Tibial artery (tissue), 4 donors: ENCODE measurements at regions of chr1 and their contacts with region 1.

Region 1: GRCh38 chr1:27662707-27663393 is 9.1 kb downstream of the IFI6 start:
- DNase-seq: peak; percentile 86 to 89
- H3K4me3 ChIP-seq: no peak overlapping the region
- H3K27ac ChIP-seq: peak overlapping the region; percentile 2 to 25
- H3K4me1 ChIP-seq: peaks cover 3 to 37% (median 17%) of the 10 kb centered on the region in 4 donors
- H3K27me3 ChIP-seq: no peaks in the 10 kb centered on the region
- CTCF ChIP-seq: peak; percentile 89 to 96

Region 2: DNA sequence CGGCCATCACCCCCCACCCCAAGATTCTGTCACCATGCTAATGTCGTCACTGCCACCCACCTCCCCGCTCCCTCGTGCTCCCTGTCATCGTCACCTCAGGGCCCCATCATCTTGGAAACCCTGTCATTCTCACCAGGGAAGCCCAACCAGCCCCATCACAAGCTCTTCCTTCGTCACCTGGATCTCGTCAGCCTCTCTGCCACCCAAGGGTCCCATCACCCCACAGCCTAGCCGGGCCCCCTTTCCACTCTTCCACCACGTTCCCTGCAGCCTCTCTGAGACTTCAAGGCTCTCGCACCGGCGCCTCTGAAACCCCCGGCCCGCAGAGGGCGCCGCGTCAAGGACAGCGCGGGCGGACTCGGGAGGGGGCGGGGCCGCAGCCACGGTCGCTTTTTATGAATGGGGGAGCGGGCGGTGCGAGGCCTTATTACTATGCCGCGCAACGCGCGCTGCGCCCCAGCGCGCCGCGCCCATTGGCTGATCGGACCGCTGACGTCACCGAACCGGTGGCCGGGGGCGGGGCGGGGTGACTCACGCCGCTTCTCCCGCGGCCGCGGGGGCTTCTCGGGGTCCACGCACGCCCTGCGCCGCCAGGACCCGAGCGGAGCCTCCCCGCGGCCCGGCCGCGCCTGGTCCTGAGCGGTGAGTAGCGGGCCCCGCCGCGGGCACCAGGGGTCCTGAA is 270.6 kb before region 1 on chr1 and contains the start of gene GPR3:
- intact Hi-C with region 1: loop called (anchors 10 kb)
- DNase-seq: peak; percentile 86 to 87
- H3K4me3 ChIP-seq: peak within 1 kb of the TSS; percentile 42 to 53
- H3K27ac ChIP-seq: peak within 1 kb of the TSS; percentile 19 to 26
- H3K4me1 ChIP-seq: peaks cover 0 to 27% (median 19%) of the 10 kb centered on the region in 4 donors
- H3K27me3 ChIP-seq: peaks cover 0 to 10% of the 10 kb centered on the region in 2 donors
- CTCF ChIP-seq: peak; percentile 41 to 54

Region 3: DNA sequence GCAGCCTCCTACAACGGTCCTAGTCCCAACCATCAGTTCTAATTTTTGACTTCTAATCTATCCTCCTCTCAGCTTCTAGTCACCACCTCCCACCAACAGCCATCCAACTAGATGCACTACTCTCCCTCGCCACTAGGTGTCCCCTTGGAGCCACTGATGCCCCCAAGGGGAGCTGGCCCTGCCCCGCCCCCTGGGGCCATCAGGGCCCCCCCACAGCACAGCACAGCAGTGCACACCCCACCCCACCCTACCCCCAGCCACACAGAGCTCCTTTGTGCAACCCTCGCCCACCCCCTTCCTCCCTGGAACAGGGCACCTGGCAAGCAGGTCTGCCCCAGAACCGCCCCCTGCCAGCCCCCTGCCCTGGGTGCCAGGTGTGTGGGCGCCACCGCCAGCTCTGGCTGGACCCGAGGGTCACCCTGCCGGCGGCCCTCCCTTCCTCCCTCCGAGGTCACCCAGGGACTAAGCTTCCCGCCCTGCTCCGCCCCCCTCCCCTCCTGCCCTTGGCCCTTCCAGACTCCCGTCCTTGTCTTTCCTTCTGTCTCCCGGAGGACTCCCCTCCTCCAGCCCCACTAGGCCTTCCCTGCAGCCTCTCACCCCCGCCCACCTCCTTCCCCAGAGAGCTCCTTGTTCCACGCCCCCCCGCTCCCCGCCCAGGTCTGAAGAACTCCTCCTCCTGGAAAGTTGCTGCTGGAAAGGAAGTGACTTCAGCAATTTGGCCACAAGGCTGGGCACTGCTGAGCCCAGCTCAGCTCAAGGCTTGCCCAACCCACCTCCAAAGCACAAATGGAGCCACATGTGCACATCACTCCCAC is 105.9 kb before region 1 on chr1:
- intact Hi-C with region 1: loop called (anchors 10 kb)
- DNase-seq: peak; percentile 97 to 99
- H3K4me3 ChIP-seq: peak overlapping the region; percentile 37 to 47
- H3K27ac ChIP-seq: peak overlapping the region; percentile 90 to 97
- H3K4me1 ChIP-seq: peaks cover 20 to 77% (median 70%) of the 10 kb centered on the region in 4 donors
- H3K27me3 ChIP-seq: no peaks in the 10 kb centered on the region
- CTCF ChIP-seq: peak; percentile 84 to 96

Region 4: GRCh38 chr1:27609618-27610240 is 53.1 kb before region 1 on chr1:
- intact Hi-C with region 1: loop called (anchors 2 kb)
- DNase-seq: no peak
- H3K4me3 ChIP-seq: no peak overlapping the region
- H3K27ac ChIP-seq: no peak overlapping the region
- H3K4me1 ChIP-seq: peaks cover 0 to 10% (median 2%) of the 10 kb centered on the region in 4 donors
- H3K27me3 ChIP-seq: peaks cover 0 to 24% of the 10 kb centered on the region in 2 donors
- CTCF ChIP-seq: no peak

Region 5: DNA sequence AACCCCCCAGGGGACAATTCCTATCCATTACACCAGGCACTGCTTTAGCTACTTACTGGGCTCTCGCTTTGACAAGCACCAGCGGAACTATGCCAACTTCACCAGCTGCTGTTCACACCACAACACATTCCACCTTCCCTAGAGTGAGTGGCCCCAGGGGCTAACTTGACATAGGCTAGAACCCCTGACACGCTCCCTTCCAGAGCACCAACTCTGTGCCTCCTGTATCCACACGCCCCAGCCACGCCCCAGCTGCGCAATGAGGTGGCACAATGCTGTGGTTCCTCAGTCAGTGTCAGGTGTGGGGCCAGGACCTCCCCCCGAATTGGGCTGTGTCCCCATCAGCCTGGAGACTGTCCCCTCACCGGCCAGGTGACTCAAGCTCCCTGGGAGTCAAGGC is 16.2 kb before region 1 on chr1:
- intact Hi-C with region 1: loop called (anchors 2 kb)
- DNase-seq: no peak
- H3K4me3 ChIP-seq: no peak overlapping the region
- H3K27ac ChIP-seq: no peak overlapping the region
- H3K4me1 ChIP-seq: peaks cover 0 to 24% (median 7%) of the 10 kb centered on the region in 4 donors
- H3K27me3 ChIP-seq: no peaks in the 10 kb centered on the region
- CTCF ChIP-seq: no peak

Region 6: DNA sequence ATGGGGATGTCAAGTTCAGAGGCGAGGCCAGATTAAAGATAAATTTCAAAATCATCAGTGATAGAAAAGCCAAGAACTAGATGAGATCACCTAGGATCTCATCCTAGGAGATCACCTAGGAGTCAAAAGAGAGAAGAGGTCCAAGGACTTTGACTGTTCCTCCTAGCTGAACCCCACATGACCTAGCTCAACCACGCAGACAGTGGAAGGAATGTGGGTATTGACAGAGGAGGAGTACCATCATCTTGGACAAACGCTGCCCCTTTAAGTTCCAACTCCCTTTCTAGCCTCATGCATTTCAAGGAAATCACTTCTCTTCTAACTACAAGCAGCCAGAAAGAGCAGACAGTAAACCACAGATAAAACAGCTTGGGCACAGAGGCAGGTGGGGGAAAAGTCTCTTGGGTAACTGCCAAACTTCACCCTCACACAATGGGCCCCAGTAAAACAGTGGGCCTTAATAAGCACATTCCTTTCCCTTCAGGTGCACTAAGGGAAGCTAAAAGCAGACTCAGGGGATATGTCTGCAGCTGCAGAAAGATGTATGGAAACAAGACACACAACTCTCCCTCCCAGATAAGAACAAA is 50.4 kb after region 1 on chr1:
- intact Hi-C with region 1: no loop called
- DNase-seq: no peak
- H3K4me3 ChIP-seq: no peak overlapping the region
- H3K27ac ChIP-seq: no peak overlapping the region
- H3K4me1 ChIP-seq: no peaks in the 10 kb centered on the region
- H3K27me3 ChIP-seq: peaks cover 0 to 6% of the 10 kb centered on the region in 2 donors
- CTCF ChIP-seq: no peak